ENCODE measurements at regions of chr1 and their contacts with region 1.

Region 1: DNA sequence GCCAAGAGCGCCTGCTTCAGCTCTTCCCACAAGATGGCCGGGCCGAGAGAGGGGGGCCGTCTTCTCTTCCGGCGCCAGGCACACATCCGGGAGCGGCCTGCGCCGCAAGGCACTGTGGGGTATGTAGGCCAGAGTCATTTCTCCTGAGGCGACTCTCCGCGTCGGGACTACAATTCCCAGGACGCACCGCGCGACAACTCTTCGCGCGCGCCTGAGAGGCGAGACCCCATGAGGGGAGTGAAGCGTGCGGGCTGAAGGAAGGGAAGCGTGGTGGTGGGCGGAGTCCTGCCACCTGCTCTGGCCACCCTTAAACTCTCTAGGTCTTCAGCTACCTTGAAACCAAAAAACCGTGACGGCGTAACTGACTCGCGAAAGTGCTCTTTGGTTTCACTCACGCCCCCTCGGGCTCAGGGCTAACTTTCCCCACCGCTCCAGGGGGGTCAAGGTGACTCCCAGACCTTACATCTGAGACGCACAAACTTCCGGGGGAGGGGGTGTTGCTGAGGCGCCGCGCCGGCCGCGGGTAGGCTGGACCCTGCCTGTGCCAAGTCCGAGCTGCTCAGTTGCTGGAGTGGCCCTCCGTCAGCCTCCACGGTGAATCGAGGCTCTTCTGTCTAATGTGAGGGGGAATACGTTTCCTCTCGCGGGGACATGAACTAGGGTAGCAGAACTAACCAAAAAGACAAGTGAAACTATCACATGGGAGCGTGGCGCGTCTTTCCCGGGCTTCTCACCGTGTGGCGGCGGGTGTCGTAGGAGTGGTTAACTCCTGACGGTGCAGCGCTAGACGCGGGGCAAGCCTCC is at the start of gene SERBP1:
- DNase-seq: peak; percentile 99
- ATAC-seq: peak; percentile 89
- H3K4me3 ChIP-seq: peak within 1 kb of the TSS; percentile 75 to 97 (median 91)
- H3K4me3 Mint-ChIP-seq: peak within 1 kb of the TSS; percentile 91
- H3K27ac ChIP-seq: peak within 1 kb of the TSS; percentile 98
- H3K27ac Mint-ChIP-seq: peak within 1 kb of the TSS; percentile 93
- H3K4me1 ChIP-seq: peaks cover 28 to 32% of the 10 kb centered on the region in 2 donors
- H3K4me1 Mint-ChIP-seq: peaks cover 57% of the 10 kb centered on the region
- H3K27me3 ChIP-seq: no peaks in the 10 kb centered on the region
- H3K27me3 Mint-ChIP-seq: no peaks in the 10 kb centered on the region
- CTCF ChIP-seq: no peak
- total RNA-seq, gene SERBP1: 142 and 146 TPM in 2 replicates

Region 2: DNA sequence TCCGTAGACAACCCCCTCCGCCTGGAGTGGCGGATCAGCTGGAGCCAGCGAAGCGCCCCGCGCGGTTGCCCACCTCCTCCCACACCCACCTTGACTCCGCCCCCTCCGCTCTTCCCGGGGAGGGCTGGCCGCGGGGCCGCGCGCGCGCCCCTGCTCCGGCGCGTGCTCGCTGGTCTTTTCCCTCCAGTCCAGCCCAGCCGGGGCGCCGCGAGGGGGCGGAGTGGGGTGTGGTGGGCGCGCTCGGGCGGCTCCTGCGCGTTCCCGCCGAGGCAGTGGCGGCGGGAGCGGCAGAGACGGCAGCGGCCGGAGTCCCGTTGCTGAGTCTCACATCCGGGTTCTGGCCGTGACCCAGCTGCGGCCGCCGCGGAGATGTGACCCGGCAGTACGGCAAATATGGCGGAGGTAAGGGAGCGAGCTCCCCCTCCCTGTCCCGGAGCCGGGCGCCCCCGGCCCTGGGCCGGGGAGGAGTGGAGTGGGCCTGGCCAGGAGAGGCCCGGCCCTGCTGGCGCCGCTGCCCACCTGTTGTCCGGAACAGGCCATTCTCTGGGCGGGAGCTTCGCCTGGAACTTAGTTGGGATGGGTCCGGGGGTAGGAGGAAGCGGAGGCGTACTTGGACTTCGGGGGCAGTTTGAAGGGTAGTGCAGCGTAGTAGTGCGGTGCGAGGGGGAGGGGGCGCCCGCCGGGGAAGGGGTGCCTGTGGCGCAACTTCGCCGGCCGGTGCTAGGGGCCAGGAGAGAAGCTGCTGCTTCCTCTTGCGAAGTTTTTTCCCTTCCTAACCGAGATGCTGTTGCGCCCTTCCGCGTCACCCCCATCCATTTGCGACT is 500.3 kb before region 1 on chr1:
- CTCF ChIA-PET with region 1: no interaction called
- POLR2A ChIA-PET with region 1: no interaction called
- intact Hi-C with region 1: loop called (anchors 1 kb)
- DNase-seq: peak; percentile 96
- ATAC-seq: peak; percentile 77
- H3K4me3 ChIP-seq: peak overlapping the region; percentile 79 to 92 (median 86)
- H3K4me3 Mint-ChIP-seq: peak overlapping the region; percentile 94
- H3K27ac ChIP-seq: peak overlapping the region; percentile 82 to 95
- H3K27ac Mint-ChIP-seq: peak overlapping the region; percentile 93
- H3K4me1 ChIP-seq: peaks cover 29 to 46% of the 10 kb centered on the region in 2 donors
- H3K4me1 Mint-ChIP-seq: peaks cover 53% of the 10 kb centered on the region
- H3K27me3 ChIP-seq: no peaks in the 10 kb centered on the region
- H3K27me3 Mint-ChIP-seq: no peaks in the 10 kb centered on the region
- CTCF ChIP-seq: peak; percentile 37

Region 3: DNA sequence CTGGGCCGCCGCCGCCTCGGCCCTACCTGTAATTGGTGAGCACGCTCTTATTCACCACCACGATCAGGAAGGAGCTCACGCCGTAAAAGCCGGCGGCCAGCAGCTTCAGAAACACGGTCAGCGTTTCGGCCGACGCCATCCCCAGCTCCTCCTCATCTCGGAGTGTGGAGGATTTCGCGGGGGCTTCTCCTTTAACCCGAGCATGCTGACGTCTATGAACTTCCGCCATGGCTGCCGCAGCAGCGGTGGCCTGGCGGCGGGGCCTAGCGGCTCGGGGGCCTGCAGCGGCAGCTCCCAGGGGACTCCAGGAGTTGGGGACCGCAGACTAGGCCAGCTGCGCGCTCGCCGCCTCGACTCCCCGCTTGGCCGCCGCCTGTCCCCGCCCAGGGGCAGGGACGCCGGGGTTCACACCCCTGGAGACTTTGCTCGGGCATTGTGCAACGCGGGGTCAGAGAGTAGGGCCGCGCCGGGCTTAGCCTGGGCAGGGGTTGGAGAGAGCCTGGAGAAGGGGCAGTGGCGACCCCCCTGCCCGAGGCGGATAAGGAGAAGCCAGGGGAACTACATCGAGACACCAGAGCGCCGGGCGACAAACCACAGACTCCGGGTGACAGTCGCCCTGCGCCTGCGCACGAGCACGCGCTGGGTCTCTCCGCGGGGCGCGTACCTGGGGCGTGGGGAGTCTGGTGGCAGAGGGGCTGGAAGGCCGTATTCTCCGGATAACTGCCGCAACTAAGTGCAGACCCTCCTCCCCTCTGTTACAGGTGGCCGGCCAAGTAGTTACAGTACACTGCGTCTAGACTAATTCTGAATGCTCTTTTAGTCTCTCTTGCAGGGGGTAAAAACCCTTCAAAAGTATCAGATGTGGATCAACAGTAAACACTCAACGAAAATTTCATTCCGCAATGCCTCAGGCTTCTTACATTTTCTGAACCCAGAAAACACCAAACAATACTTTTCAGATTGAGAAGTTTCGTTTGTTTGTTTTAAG is 376.5 kb before region 1 on chr1 and contains the start of gene SLC35D1:
- CTCF ChIA-PET with region 1: no interaction called
- POLR2A ChIA-PET with region 1: no interaction called
- intact Hi-C with region 1: loop called (anchors 2 kb)
- DNase-seq: peak; percentile 93
- ATAC-seq: peak; percentile 88
- H3K4me3 ChIP-seq: peak within 1 kb of the TSS; percentile 68 to 78 (median 77)
- H3K4me3 Mint-ChIP-seq: peak within 1 kb of the TSS; percentile 90
- H3K27ac ChIP-seq: peak within 1 kb of the TSS; percentile 84 to 88
- H3K27ac Mint-ChIP-seq: peak within 1 kb of the TSS; percentile 95
- H3K4me1 ChIP-seq: peaks cover 11 to 15% of the 10 kb centered on the region in 2 donors
- H3K4me1 Mint-ChIP-seq: peaks cover 26% of the 10 kb centered on the region
- H3K27me3 ChIP-seq: no peaks in the 10 kb centered on the region
- H3K27me3 Mint-ChIP-seq: no peaks in the 10 kb centered on the region
- CTCF ChIP-seq: no peak
- total RNA-seq, gene SLC35D1: 16.8 and 17.1 TPM in 2 replicates

Region 4: DNA sequence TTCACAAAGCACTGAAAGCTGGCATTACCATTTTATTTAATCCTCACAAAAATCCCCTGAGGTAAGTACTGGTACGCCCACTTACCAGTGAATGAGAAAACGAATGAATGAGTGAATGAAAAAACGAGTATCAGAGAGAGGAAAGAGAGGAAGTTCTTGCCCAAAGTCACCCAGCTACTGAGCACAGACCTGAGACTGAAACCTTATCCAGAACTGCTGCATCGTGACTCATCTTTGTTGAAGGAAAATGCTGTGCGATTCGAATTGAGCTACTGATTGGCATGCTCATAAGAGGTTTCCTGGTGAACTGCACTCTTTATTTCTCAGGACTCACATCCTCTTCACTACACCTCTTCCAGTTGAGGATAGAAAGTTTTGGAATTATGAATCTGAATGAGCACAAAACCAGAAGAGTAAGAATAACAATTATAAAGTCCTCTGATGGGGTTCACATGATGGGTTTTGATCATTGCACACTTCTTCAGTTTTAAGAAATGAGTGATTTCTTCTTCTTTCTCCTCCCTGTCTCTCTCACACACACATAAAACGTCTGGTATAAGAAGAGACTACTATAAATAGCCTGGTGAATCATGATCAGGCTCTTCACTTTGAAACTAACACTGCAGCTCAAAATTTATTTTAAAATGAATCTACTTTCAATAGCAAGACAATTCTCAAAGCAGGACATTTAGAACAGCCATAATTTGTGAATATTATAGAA is 90.8 kb before region 1 on chr1:
- CTCF ChIA-PET with region 1: interaction called, 3 read pairs
- POLR2A ChIA-PET with region 1: no interaction called
- intact Hi-C with region 1: loop called (anchors 1 kb)
- DNase-seq: peak; percentile 35
- ATAC-seq: peak; percentile 13
- H3K4me3 ChIP-seq: no peak overlapping the region
- H3K4me3 Mint-ChIP-seq: peak overlapping the region; percentile 55
- H3K27ac ChIP-seq: no peak overlapping the region
- H3K27ac Mint-ChIP-seq: peak overlapping the region; percentile 1
- H3K4me1 ChIP-seq: peaks cover 51 to 54% of the 10 kb centered on the region in 2 donors
- H3K4me1 Mint-ChIP-seq: peaks cover 59% of the 10 kb centered on the region
- H3K27me3 ChIP-seq: no peaks in the 10 kb centered on the region
- H3K27me3 Mint-ChIP-seq: peaks cover 4% of the 10 kb centered on the region
- CTCF ChIP-seq: no peak

Region 5: DNA sequence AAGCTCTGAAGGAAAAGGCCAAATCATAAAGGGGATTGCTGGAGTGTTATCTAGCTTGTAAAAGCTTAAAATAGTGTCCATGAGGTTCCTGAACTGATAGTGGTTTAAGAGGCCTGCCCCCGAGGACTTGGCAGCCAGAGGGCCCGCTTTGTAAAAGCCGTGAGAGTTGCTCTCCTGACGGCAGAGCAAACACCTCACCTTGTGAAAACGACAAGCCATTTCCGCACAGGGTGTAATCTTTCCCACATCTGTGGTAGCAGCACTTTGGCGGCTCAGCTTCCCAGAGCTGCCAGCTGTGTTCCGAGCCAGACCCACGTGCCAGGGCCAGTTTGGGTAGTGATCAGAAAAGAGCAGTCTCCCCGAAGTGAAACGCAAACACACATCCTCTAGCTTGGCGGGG is 37.3 kb before region 1 on chr1:
- CTCF ChIA-PET with region 1: no interaction called
- POLR2A ChIA-PET with region 1: no interaction called
- intact Hi-C with region 1: no loop called
- DNase-seq: no peak
- ATAC-seq: no peak
- H3K4me3 ChIP-seq: no peak overlapping the region
- H3K4me3 Mint-ChIP-seq: no peak overlapping the region
- H3K27ac ChIP-seq: no peak overlapping the region
- H3K27ac Mint-ChIP-seq: no peak overlapping the region
- H3K4me1 ChIP-seq: no peaks in the 10 kb centered on the region
- H3K4me1 Mint-ChIP-seq: no peaks in the 10 kb centered on the region
- H3K27me3 ChIP-seq: no peaks in the 10 kb centered on the region
- H3K27me3 Mint-ChIP-seq: no peaks in the 10 kb centered on the region
- CTCF ChIP-seq: no peak

Region 6: DNA sequence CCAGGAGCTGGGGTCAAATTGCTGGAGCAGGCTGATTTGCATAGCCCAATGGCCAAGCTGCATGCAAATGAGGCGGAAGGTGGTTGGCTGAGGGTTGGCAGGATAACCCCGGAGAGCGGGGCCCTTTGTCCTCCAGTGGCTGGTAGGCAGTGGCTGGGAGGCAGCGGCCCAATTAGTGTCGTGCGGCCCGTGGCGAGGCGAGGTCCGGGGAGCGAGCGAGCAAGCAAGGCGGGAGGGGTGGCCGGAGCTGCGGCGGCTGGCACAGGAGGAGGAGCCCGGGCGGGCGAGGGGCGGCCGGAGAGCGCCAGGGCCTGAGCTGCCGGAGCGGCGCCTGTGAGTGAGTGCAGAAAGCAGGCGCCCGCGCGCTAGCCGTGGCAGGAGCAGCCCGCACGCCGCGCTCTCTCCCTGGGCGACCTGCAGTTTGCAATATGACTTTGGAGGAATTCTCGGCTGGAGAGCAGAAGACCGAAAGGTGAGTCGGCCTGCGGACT is 254.6 kb after region 1 on chr1 and contains the start of gene GADD45A:
- CTCF ChIA-PET with region 1: no interaction called
- POLR2A ChIA-PET with region 1: interaction called, 4 read pairs
- intact Hi-C with region 1: loop called (anchors 1 kb)
- DNase-seq: peak; percentile 95
- ATAC-seq: peak; percentile 88
- H3K4me3 ChIP-seq: peak within 1 kb of the TSS; percentile 66 to 91 (median 80)
- H3K4me3 Mint-ChIP-seq: peak within 1 kb of the TSS; percentile 91
- H3K27ac ChIP-seq: peak within 1 kb of the TSS; percentile 15 to 42
- H3K27ac Mint-ChIP-seq: peak within 1 kb of the TSS; percentile 81
- H3K4me1 ChIP-seq: peaks cover 16 to 17% of the 10 kb centered on the region in 2 donors
- H3K4me1 Mint-ChIP-seq: peaks cover 31% of the 10 kb centered on the region
- H3K27me3 ChIP-seq: no peaks in the 10 kb centered on the region
- H3K27me3 Mint-ChIP-seq: no peaks in the 10 kb centered on the region
- CTCF ChIP-seq: no peak
- total RNA-seq, gene GADD45A: 21.1 and 22.7 TPM in 2 replicates

Region 7: DNA sequence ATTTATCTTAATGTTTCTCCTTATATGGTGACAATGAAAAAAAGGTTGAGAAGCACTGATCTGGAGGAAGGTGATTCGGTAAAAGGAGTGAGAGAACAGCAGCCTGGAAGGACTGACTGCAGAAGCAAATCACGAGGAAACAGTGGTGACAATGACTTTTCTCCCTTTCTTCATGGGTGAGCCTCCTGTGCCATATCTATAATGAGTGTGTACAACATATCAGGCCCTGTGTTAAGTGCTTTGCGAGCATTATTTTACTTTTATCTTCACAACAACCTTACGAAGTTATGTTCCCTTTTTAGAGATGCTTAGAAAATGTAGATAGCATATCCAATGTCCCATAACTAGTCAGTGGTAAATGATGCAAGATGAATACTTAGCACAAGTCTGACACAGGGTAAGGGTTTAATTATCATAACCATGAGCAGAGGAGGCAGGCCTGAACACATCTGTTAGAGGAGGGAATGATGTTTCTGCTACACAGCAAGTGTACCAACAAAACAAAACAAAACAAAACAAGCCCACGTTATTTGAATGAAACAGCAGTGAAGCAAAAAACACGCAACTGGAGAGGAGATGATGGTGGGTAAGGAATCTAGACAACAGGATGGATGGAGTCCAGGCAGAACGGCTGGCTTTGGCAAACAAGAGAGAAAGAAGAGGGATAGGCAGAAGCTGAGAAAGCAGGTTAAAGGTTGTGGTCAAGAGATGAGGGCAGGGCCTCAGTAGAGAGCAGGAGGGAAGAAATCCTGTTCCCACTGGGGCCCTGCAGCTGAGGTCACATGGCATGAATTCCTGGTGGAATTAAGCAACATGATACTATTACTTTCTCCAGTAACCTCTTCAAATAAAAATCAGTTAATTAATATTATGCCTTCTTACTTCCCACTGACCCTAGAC is 373.1 kb after region 1 on chr1:
- CTCF ChIA-PET with region 1: no interaction called
- POLR2A ChIA-PET with region 1: no interaction called
- intact Hi-C with region 1: no loop called
- DNase-seq: no peak
- ATAC-seq: no peak
- H3K4me3 ChIP-seq: no peak overlapping the region
- H3K4me3 Mint-ChIP-seq: no peak overlapping the region
- H3K27ac ChIP-seq: no peak overlapping the region
- H3K27ac Mint-ChIP-seq: no peak overlapping the region
- H3K4me1 ChIP-seq: no peaks in the 10 kb centered on the region
- H3K4me1 Mint-ChIP-seq: no peaks in the 10 kb centered on the region
- H3K27me3 ChIP-seq: peaks cover 0 to 6% (median 0%) of the 10 kb centered on the region in 4 experiments
- H3K27me3 Mint-ChIP-seq: peaks cover 48% of the 10 kb centered on the region
- CTCF ChIP-seq: no peak

Measured in B cell (primary cell).